Activated CD4-positive, alpha-beta T cell treated with anti-CD3 and anti-CD28 coated beads for 36 hours (primary cell): ENCODE measurements at regions of chr3 and their contacts with region 1.

Region 1: DNA sequence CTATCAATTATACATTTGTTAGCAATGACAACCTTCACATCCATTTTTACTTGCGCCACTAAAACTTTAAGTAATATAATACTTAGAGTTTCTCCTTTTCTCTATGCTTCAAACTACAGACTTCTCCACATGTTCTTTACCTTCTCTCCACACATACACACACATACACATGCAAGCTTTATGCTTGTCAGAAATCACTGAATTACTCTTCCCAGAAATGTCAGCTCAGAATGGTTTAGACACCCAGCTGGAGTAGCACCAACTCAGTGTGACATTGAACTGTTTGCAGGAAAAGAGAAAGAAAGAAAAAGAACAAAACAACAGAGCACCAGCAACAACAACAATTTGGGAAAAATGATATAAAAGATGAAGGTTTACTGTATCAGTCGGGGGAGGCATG is 20.9 kb downstream of the CBLB start:
- DNase-seq: no peak
- ATAC-seq: peak; percentile 61
- H3K4me3 Mint-ChIP-seq: peak overlapping the region; percentile 20
- H3K27ac Mint-ChIP-seq: peak overlapping the region; percentile 58
- H3K4me1 Mint-ChIP-seq: peaks cover 62% of the 10 kb centered on the region
- H3K27me3 Mint-ChIP-seq: no peaks in the 10 kb centered on the region

Region 2: GRCh38 chr3:105647047-105647446 is 200.8 kb before region 1 on chr3:
- CTCF ChIA-PET with region 1: no interaction called
- POLR2A ChIA-PET with region 1: no interaction called
- intact Hi-C with region 1: no loop called
- DNase-seq: no peak
- ATAC-seq: peak; percentile 49
- H3K4me3 Mint-ChIP-seq: no peak overlapping the region
- H3K27ac Mint-ChIP-seq: no peak overlapping the region
- H3K4me1 Mint-ChIP-seq: no peaks in the 10 kb centered on the region
- H3K27me3 Mint-ChIP-seq: no peaks in the 10 kb centered on the region

Region 3: GRCh38 chr3:105722943-105723556 is 124.8 kb before region 1 on chr3:
- CTCF ChIA-PET with region 1: no interaction called
- POLR2A ChIA-PET with region 1: no interaction called
- intact Hi-C with region 1: no loop called
- DNase-seq: no peak
- ATAC-seq: peak; percentile 60
- H3K4me3 Mint-ChIP-seq: no peak overlapping the region
- H3K27ac Mint-ChIP-seq: no peak overlapping the region
- H3K4me1 Mint-ChIP-seq: peaks cover 21% of the 10 kb centered on the region
- H3K27me3 Mint-ChIP-seq: no peaks in the 10 kb centered on the region

Region 4: DNA sequence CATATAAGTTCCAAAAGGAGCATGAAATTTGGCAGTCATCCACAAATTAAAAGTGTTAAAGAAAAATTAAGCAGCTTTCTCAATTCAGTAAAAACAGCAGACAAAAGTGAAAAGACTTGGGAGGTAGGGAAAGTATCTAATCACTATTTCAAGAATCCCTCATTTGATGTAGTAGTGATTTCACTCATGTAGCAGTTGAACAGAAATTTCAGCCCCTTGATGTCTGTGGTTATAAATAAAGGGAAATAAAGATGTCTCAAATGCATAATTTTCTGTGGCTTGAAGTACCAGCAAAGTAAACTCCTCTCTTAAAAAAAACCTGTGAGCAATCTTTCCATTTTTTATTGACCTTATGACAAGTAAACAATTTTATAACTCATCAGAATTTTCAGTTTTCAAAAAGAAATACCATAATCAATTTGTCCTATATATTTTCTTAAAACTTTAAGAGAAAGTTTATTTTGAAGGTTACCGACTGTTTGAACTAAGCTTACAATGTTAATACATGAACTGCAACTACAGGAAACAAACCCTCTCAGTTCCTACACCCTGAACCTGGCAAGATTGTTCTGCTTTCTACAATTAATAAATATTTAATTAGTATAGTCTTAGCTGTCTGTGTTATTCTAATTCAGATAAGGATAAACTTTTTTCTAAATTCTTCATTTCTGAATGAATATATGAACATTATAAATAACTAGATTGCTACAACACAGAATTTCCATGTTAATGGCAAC is 73.3 kb before region 1 on chr3:
- CTCF ChIA-PET with region 1: no interaction called
- POLR2A ChIA-PET with region 1: no interaction called
- intact Hi-C with region 1: no loop called
- DNase-seq: no peak
- ATAC-seq: peak; percentile 72
- H3K4me3 Mint-ChIP-seq: peak overlapping the region; percentile 12
- H3K27ac Mint-ChIP-seq: peak overlapping the region; percentile 78
- H3K4me1 Mint-ChIP-seq: peaks cover 81% of the 10 kb centered on the region
- H3K27me3 Mint-ChIP-seq: no peaks in the 10 kb centered on the region

Region 5: GRCh38 chr3:105836533-105836932 is 11.3 kb before region 1 on chr3:
- CTCF ChIA-PET with region 1: interaction called, 4 read pairs
- POLR2A ChIA-PET with region 1: interaction called, 8 read pairs
- intact Hi-C with region 1: loop called in 1 of 2 experiments (anchors 1 kb)
- DNase-seq: peak; percentile 73
- ATAC-seq: peak; percentile 68
- H3K4me3 Mint-ChIP-seq: peak overlapping the region; percentile 15
- H3K27ac Mint-ChIP-seq: peak overlapping the region; percentile 81
- H3K4me1 Mint-ChIP-seq: peaks cover 80% of the 10 kb centered on the region
- H3K27me3 Mint-ChIP-seq: no peaks in the 10 kb centered on the region